Activated CD4-positive, alpha-beta T cell treated with anti-CD3 and anti-CD28 coated beads for 36 hours (primary cell): ENCODE measurements at regions of chr19 and their contacts with region 1.

Region 1: GRCh38 chr19:5803752-5804515 is 933 bp upstream of the NRTN start:
- DNase-seq: peak; percentile 98
- ATAC-seq: peak; percentile 97
- H3K4me3 Mint-ChIP-seq: peak overlapping the region; percentile 63
- H3K27ac Mint-ChIP-seq: peak overlapping the region; percentile 47
- H3K4me1 Mint-ChIP-seq: peaks cover 21% of the 10 kb centered on the region
- H3K27me3 Mint-ChIP-seq: peaks cover 20% of the 10 kb centered on the region

Region 2: GRCh38 chr19:5515737-5516136 is 288.2 kb before region 1 on chr19:
- CTCF ChIA-PET with region 1: no interaction called
- POLR2A ChIA-PET with region 1: no interaction called
- intact Hi-C with region 1: no loop called
- DNase-seq: no peak
- ATAC-seq: no peak
- H3K4me3 Mint-ChIP-seq: no peak overlapping the region
- H3K27ac Mint-ChIP-seq: no peak overlapping the region
- H3K4me1 Mint-ChIP-seq: no peaks in the 10 kb centered on the region
- H3K27me3 Mint-ChIP-seq: peaks cover 11% of the 10 kb centered on the region

Region 3: GRCh38 chr19:5680437-5681368 is 123.2 kb before region 1 on chr19 and contains the starts of genes HSD11B1L and MICOS13:
- CTCF ChIA-PET with region 1: no interaction called
- POLR2A ChIA-PET with region 1: no interaction called
- intact Hi-C with region 1: loop called in 1 of 2 experiments (anchors 1 kb)
- DNase-seq: peak; percentile 99
- ATAC-seq: peak; percentile 97
- H3K4me3 Mint-ChIP-seq: peak within 1 kb of the TSS; percentile 99
- H3K27ac Mint-ChIP-seq: peak within 1 kb of the TSS; percentile 94
- H3K4me1 Mint-ChIP-seq: peaks cover 20% of the 10 kb centered on the region
- H3K27me3 Mint-ChIP-seq: no peaks in the 10 kb centered on the region
- total RNA-seq, gene HSD11B1L: 2.0 to 3.2 TPM
- total RNA-seq, gene MICOS13: 50.9 to 52.1 TPM

Region 4: GRCh38 chr19:5690125-5690954 is 113.6 kb before region 1 on chr19 and contains the start of gene RPL36:
- CTCF ChIA-PET with region 1: interaction called, 6 read pairs
- POLR2A ChIA-PET with region 1: interaction called, 3 read pairs
- intact Hi-C with region 1: loop called in 1 of 2 experiments (anchors 1 kb)
- DNase-seq: peak; percentile 100
- ATAC-seq: peak; percentile 54
- H3K4me3 Mint-ChIP-seq: peak within 1 kb of the TSS; percentile 100
- H3K27ac Mint-ChIP-seq: peak within 1 kb of the TSS; percentile 96
- H3K4me1 Mint-ChIP-seq: peaks cover 21% of the 10 kb centered on the region
- H3K27me3 Mint-ChIP-seq: no peaks in the 10 kb centered on the region
- total RNA-seq, gene RPL36: 1,452 to 1,530 TPM

Region 5: GRCh38 chr19:5891938-5892771 is 88.2 kb after region 1 on chr19:
- CTCF ChIA-PET with region 1: interaction called, 10 read pairs
- POLR2A ChIA-PET with region 1: interaction called, 5 read pairs
- intact Hi-C with region 1: loop called in 1 of 2 experiments (anchors 1 kb)
- DNase-seq: peak; percentile 47
- ATAC-seq: peak; percentile 57
- H3K4me3 Mint-ChIP-seq: no peak overlapping the region
- H3K27ac Mint-ChIP-seq: no peak overlapping the region
- H3K4me1 Mint-ChIP-seq: no peaks in the 10 kb centered on the region
- H3K27me3 Mint-ChIP-seq: peaks cover 2% of the 10 kb centered on the region

Region 6: DNA sequence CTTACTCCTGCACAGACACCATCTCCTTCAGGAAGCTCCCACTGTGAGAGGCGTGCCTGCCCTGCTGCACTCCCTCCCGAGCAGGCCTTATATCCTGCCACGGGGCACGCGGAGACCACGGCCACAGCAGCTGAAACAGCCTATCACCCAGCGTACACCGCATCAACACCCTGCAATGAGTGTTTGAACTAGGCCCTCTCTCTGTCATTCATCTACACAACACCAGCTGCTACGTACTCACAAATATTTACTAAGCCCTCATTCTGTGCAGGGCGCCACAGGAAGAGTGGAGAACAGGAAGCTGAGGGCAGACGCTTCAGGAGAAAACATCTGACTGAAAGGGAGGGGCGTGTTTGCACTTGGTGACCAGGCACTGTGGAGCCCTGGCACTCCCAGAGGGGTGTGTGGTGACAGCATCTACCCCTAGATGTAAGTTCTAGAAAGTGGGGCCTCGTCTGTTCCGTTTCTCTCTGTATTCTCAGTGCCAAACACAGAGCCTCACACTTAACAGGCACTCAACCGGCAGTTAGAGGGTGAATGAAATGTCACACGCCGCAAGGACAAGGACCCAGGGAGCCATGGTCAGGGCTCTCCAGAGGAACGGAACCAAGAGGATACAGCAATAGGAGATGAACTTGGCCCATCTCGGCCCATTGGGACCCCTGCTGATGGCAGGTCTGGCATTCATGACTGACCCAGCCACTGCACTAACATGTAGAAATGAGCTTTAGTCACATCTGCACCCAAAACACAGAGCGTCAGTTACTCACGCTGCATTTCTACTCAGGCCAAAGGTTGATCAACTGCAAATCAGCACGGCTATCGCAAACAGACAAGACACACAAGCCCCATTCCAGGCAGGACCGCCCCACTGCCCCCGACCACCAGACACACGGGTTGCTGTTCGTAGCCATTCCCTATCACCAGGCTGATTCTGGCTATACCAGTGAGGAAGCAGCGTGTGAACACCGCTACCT is 158.3 kb after region 1 on chr19:
- CTCF ChIA-PET with region 1: interaction called, 6 read pairs
- POLR2A ChIA-PET with region 1: no interaction called
- intact Hi-C with region 1: loop called in 1 of 2 experiments (anchors 5 kb)
- DNase-seq: peak; percentile 80
- ATAC-seq: peak; percentile 96
- H3K4me3 Mint-ChIP-seq: peak overlapping the region; percentile 44
- H3K27ac Mint-ChIP-seq: peak overlapping the region; percentile 83
- H3K4me1 Mint-ChIP-seq: peaks cover 91% of the 10 kb centered on the region
- H3K27me3 Mint-ChIP-seq: no peaks in the 10 kb centered on the region